ENCODE measurements at regions of chr9 and their contacts with region 1.

Region 1: DNA sequence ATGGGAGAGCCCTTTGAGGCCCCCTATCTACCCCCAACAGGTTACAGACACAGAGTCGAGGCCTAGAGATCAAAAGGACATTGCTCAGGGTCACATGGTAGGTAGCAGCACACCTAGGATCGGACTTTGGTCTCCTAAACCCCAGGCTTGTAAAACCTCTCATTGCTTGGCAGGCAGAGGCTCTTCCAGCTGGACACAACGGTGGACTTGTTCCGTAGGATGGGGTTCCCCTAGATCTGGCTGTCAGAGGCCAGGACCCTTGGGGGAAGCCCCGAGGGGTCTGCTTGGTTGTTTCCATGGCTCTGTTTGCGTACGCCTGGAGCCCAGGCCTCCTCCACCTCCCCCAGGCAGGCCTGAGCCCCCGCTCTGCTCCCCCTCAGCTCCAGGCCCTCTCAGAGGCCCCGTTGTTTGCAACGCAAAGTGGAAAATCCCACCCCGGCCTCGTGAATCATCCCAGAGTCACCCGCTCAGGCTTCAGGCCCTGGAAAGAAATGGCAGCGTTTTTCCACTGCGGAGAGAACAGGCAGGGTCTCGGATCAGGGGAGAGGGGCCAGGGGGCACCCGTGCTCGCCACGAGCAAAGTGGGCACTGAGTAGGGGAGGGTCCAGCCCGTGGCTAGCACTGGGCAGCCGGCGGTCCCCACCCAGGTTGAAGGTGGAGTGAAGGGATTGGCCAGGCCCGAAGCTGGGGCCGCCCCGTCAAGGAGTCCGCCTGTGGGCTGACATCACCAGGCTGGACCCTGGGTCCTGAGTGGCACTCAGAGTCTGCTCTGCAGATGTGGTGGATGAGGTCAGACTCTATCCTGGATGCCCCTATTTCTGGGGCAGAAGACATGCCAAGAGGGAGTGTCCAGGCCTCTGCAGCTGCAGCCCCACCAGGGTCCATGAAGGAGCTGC is 19.8 kb downstream of the COL27A1 start:
- DNase-seq: no peak
- H3K4me3 ChIP-seq: no peak overlapping the region
- H3K27ac ChIP-seq: no peak overlapping the region
- H3K4me1 ChIP-seq: peaks cover 27% of the 10 kb centered on the region
- H3K27me3 ChIP-seq: no peaks in the 10 kb centered on the region
- CTCF ChIP-seq: no peak

Region 2: DNA sequence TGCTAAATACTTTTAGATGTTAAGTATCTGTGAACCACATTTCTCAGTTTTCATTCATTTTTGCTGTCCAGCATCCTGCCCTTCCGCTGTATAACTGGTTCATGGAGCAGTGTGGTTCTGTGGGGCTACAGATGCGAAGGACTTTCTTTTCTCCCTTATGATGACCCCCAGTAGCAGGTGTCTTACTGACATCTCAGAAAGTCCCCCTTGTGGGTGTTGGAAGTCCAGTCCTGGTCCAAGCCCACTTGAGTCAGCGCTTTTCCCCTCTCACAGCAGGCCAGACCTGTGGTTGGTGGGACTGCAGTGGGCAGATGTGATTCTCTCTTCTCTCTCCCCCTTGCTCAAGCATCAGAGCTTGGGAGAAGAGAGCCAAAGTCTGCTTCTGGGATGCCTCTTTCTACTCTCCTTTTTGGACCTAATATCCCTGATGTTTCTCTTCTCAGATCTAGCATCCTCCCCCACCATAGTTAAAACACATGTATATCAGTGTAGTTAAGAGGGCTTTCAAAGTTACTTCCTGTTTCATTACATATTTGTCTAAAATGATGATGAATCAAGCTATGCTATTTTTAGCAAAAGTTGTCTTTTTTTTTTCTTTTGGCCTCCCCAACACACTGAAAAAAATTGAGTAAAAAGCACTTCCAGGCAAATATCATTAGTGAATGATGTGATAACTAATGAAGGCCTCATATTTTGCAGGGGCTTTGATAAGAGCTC is 418.5 kb before region 1 on chr9:
- CTCF ChIA-PET with region 1: no interaction called
- dilution Hi-C with region 1: no loop called
- in situ Hi-C with region 1: no loop called
- intact Hi-C with region 1: no loop called
- DNase-seq: no peak
- H3K4me3 ChIP-seq: no peak overlapping the region
- H3K27ac ChIP-seq: no peak overlapping the region
- H3K4me1 ChIP-seq: no peaks in the 10 kb centered on the region
- H3K27me3 ChIP-seq: no peaks in the 10 kb centered on the region
- CTCF ChIP-seq: no peak

Region 3: DNA sequence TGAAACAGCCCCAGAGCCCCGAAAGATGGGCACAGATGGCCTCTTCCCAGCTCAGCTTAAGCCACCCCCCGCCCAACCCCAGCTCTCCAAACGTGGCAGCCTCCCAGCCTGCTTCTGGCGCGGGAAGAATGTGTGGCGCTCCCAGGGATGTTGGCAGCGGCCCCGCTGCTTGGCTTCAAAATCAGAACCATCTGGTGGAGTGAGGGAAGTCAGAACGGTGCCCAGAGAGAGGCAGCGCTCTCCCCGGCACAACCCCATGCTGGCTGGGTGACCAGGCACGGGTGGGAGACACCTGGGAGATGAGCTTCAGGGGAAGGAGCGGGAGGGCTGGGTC is 75.1 kb after region 1 on chr9:
- CTCF ChIA-PET with region 1: no interaction called
- dilution Hi-C with region 1: loop called (anchors 5 kb)
- in situ Hi-C with region 1: no loop called
- intact Hi-C with region 1: no loop called
- DNase-seq: no peak
- H3K4me3 ChIP-seq: no peak overlapping the region
- H3K27ac ChIP-seq: no peak overlapping the region
- H3K4me1 ChIP-seq: no peaks in the 10 kb centered on the region
- H3K27me3 ChIP-seq: no peaks in the 10 kb centered on the region
- CTCF ChIP-seq: no peak

Region 4: GRCh38 chr9:114769624-114770023 is 594.5 kb after region 1 on chr9:
- CTCF ChIA-PET with region 1: no interaction called
- dilution Hi-C with region 1: no loop called
- in situ Hi-C with region 1: no loop called
- intact Hi-C with region 1: no loop called
- DNase-seq: peak; percentile 14
- H3K4me3 ChIP-seq: no peak overlapping the region
- H3K27ac ChIP-seq: no peak overlapping the region
- H3K4me1 ChIP-seq: peaks cover 11% of the 10 kb centered on the region
- H3K27me3 ChIP-seq: no peaks in the 10 kb centered on the region
- CTCF ChIP-seq: no peak

Measured in mammary epithelial cell (primary cell).